Sigmoid colon (tissue), 7 donors: ENCODE measurements at regions of chr4 and their contacts with region 1.

Region 1: DNA sequence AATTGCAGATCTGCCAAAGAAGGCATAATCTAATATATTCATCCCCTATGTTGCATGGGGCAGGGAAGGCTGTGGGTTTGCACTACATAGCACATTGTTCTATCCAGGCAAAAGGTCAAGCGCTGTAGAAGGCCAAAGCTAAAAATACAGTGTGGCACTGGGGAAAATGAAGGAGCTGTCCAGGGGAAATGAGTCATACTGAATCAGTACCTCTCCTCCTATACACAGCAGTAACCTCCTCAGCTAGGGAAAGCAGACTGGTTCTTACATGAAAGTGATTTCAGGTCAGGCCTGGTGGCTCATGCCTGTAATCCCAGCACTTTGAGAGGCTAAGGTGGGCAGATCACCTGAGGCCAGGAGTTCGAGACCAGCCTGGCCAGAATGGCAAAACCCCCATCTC is 31.0 kb upstream of the SLC25A4 start:
- DNase-seq: no peak
- H3K4me3 ChIP-seq: no peak overlapping the region
- H3K27ac ChIP-seq: peak overlapping the region in 3 of 4 donors; percentile 63 to 77 (median 71)
- H3K4me1 ChIP-seq: peaks cover 0 to 18% (median 7%) of the 10 kb centered on the region in 4 donors
- H3K27me3 ChIP-seq: no peaks in the 10 kb centered on the region
- CTCF ChIP-seq: no peak
- EP300 ChIP-seq: no peak
- POLR2A ChIP-seq: no peak

Region 2: DNA sequence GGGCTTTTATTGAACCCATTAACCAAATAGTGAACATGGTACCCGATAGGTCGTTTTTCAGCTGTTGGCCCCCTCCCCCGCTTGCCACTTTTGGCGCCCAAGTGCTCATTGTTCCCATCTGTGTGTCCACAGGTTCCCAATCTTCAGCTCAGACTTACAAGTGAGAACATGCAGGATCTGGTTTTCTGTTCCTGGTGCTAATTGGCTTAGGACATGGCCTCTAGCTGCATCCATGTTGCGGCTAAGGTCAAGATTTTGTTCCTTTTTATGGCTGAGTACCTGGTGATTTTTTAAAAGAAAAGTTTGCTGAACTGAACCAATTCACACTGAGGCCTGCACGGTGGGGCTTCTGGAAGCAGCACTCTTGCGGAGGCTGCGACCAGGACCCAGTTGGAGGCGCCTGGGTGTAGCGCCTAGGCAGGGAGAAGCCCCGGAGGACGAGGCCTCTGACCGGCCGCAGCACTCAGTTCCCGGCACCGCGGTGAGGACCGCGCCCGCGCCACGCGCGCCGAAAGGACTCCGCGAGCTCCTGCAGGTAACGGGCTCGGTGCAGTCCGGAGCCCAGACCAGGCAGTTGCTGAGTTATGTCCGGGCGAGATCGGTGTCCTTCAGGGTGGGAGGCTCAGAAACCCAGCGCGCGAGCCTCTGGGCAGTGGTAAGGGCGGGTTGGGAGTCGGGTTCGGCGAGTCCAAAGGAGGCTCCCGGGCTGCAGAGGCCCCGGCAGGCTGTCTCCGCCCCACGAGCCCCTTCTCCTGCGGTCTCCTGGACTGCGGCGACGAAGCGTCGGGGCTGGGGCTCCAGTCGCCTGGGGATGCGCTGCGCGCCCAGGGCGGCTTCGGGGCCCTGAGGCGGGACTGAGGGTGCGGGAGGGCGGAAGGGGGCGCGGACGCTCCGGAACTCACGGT is 15.2 kb after region 1 on chr4:
- intact Hi-C with region 1: loop called (anchors 1 kb)
- DNase-seq: no peak
- H3K4me3 ChIP-seq: peak overlapping the region; percentile 53 to 67 (median 58)
- H3K27ac ChIP-seq: peak overlapping the region in 2 of 4 donors; percentile 43 to 89
- H3K4me1 ChIP-seq: peaks cover 0 to 23% (median 14%) of the 10 kb centered on the region in 4 donors
- H3K27me3 ChIP-seq: no peaks in the 10 kb centered on the region
- CTCF ChIP-seq: no peak
- EP300 ChIP-seq: no peak
- POLR2A ChIP-seq: no peak